Posterior vena cava (tissue), 2 donors: ENCODE measurements at regions of chr5 and their contacts with region 1.

Region 1: GRCh38 chr5:14063138-14063537 is 80.0 kb upstream of the TRIO start:
- DNase-seq: no peak

Region 2: DNA sequence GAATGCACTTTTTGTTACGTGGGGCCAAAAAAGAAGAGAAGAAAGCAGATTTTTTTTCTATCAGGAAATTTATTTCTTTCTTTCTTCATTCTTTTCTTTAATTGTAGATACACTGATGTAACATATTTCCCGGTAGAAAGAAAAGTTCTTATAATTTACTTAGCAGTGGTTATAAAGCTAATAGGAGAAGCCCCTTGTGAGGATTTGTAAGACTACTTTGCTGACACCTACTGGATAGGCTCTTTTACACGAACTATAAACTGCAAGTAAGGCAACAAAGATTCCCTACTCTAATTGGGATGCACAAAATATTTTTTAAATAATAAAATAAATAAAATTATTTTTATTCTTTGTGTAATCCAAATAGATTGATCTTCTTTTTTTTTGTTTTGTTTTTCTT is 403.1 kb before region 1 on chr5:
- intact Hi-C with region 1: loop called in 1 of 2 experiments (anchors 10 kb)
- DNase-seq: no peak

Region 3: GRCh38 chr5:14463629-14464028 is 400.5 kb after region 1 on chr5:
- intact Hi-C with region 1: no loop called
- DNase-seq: no peak